Activated B cell treated with CpG ODN at 0.5 μM for 24 hours (primary cell): ENCODE measurements at regions of chr13 and their contacts with region 1.

Region 1: GRCh38 chr13:50594276-50595051 is 249.0 kb downstream of the DLEU7 start:
- DNase-seq: peak; percentile 76
- ATAC-seq: peak; percentile 88
- H3K4me3 Mint-ChIP-seq: peak overlapping the region; percentile 73
- H3K27ac Mint-ChIP-seq: peak overlapping the region; percentile 98
- H3K4me1 Mint-ChIP-seq: peaks cover 95% of the 10 kb centered on the region
- H3K27me3 Mint-ChIP-seq: no peaks in the 10 kb centered on the region
- CTCF ChIP-seq: no peak

Region 2: GRCh38 chr13:49976314-49977258 is 617.9 kb before region 1 on chr13:
- CTCF ChIA-PET with region 1: interaction called, 3 read pairs
- POLR2A ChIA-PET with region 1: no interaction called
- intact Hi-C with region 1: loop called (anchors 1 kb)
- DNase-seq: peak; percentile 57
- ATAC-seq: peak; percentile 86
- H3K4me3 Mint-ChIP-seq: no peak overlapping the region
- H3K27ac Mint-ChIP-seq: no peak overlapping the region
- H3K4me1 Mint-ChIP-seq: peaks cover 2% of the 10 kb centered on the region
- H3K27me3 Mint-ChIP-seq: no peaks in the 10 kb centered on the region
- CTCF ChIP-seq: no peak

Region 3: GRCh38 chr13:50236898-50237318 is 357.6 kb before region 1 on chr13:
- CTCF ChIA-PET with region 1: no interaction called
- POLR2A ChIA-PET with region 1: interaction called, 3 read pairs
- intact Hi-C with region 1: loop called (anchors 2 kb)
- DNase-seq: no peak
- ATAC-seq: peak; percentile 90
- H3K4me3 Mint-ChIP-seq: peak overlapping the region; percentile 55
- H3K27ac Mint-ChIP-seq: peak overlapping the region; percentile 92
- H3K4me1 Mint-ChIP-seq: peaks cover 53% of the 10 kb centered on the region
- H3K27me3 Mint-ChIP-seq: no peaks in the 10 kb centered on the region
- CTCF ChIP-seq: no peak

Region 4: GRCh38 chr13:50512474-50513299 is 81.8 kb before region 1 on chr13:
- CTCF ChIA-PET with region 1: no interaction called
- POLR2A ChIA-PET with region 1: interaction called, 15 read pairs
- intact Hi-C with region 1: no loop called
- DNase-seq: peak; percentile 40
- ATAC-seq: peak; percentile 81
- H3K4me3 Mint-ChIP-seq: no peak overlapping the region
- H3K27ac Mint-ChIP-seq: no peak overlapping the region
- H3K4me1 Mint-ChIP-seq: peaks cover 3% of the 10 kb centered on the region
- H3K27me3 Mint-ChIP-seq: no peaks in the 10 kb centered on the region
- CTCF ChIP-seq: no peak

Region 5: GRCh38 chr13:50613356-50613831 is 18.9 kb after region 1 on chr13:
- CTCF ChIA-PET with region 1: interaction called, 3 read pairs
- POLR2A ChIA-PET with region 1: interaction called, 5 read pairs
- intact Hi-C with region 1: loop called (anchors 2 kb)
- DNase-seq: no peak
- ATAC-seq: no peak
- H3K4me3 Mint-ChIP-seq: no peak overlapping the region
- H3K27ac Mint-ChIP-seq: no peak overlapping the region
- H3K4me1 Mint-ChIP-seq: peaks cover 45% of the 10 kb centered on the region
- H3K27me3 Mint-ChIP-seq: no peaks in the 10 kb centered on the region
- CTCF ChIP-seq: no peak